Endothelial cell of umbilical vein (primary cell): ENCODE measurements at regions of chrX and their contacts with region 1.

Region 1: DNA sequence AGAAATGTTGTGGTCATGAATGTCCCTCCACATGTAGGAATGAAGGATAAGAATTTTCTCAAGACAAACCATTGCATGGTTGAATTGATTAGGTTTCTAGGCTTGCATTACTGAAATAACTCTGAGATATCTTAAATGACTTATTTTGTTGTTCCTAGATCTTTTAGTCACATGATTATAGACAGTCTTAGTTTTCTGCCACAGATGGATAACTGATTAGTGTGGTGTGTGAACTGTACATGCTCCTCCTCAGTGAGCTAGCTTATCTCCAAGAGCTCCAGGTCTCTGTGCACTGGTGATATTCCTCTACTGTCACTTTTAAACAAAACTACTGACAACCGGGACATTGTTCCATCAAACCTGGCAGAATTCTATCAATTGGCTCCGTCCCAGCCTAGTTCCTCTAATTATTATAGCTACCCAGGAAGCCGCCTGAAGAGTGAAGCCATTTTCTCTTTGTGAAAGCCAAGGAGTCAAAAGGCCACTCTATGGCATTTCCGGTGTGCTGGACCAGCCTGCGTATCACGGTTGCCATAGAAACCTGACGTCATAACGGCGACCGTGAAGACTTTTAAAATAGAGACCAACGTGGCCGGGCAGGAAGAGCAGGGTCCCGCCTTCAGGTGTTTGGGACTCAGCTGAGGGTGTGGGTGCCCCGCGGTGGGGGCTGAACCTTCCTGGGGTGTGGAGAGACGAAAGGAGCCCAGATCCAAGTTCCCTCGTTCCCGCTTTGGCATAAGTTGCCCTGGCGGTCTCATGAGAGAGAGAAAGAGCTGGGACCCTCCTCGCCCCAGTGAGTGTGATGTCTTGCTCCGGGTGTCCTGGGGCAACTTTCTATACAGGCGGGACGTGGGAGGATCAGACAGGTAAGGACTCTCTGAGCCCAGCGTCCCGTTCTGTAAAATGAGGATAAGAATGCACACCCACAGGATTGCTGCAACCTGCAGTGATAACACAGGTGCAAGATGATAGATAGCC is 28.2 kb downstream of the BEX3 start:
- DNase-seq: peak; percentile 79
- H3K4me3 ChIP-seq: peak overlapping the region; percentile 19 to 62 (median 41)
- H3K27ac ChIP-seq: peak overlapping the region; percentile 71
- H3K4me1 ChIP-seq: peaks cover 11% of the 10 kb centered on the region
- H3K27me3 ChIP-seq: no peaks in the 10 kb centered on the region
- CTCF ChIP-seq: no peak
- POLR2A ChIP-seq: no peak

Region 2: GRCh38 chrX:103356130-103356798 is 48.3 kb before region 1 on chrX and contains the start of gene TCEAL9:
- CTCF ChIA-PET with region 1: no interaction called
- POLR2A ChIA-PET with region 1: interaction called, 7 read pairs
- dilution Hi-C with region 1: no loop called
- intact Hi-C with region 1: loop called (anchors 1 kb)
- DNase-seq: peak; percentile 79
- H3K4me3 ChIP-seq: peak within 1 kb of the TSS; percentile 81 to 97 (median 90)
- H3K27ac ChIP-seq: peak within 1 kb of the TSS; percentile 91
- H3K4me1 ChIP-seq: peaks cover 18% of the 10 kb centered on the region
- H3K27me3 ChIP-seq: no peaks in the 10 kb centered on the region
- CTCF ChIP-seq: no peak
- POLR2A ChIP-seq: peak; percentile 78
- total RNA-seq, gene TCEAL9: 98.3 and 99.2 TPM in 2 replicates

Region 3: GRCh38 chrX:103756736-103757135 is 352.2 kb after region 1 on chrX:
- CTCF ChIA-PET with region 1: no interaction called
- POLR2A ChIA-PET with region 1: no interaction called
- dilution Hi-C with region 1: no loop called
- intact Hi-C with region 1: no loop called
- DNase-seq: no peak
- H3K4me3 ChIP-seq: no peak overlapping the region
- H3K27ac ChIP-seq: no peak overlapping the region
- H3K4me1 ChIP-seq: no peaks in the 10 kb centered on the region
- H3K27me3 ChIP-seq: no peaks in the 10 kb centered on the region
- CTCF ChIP-seq: no peak
- POLR2A ChIP-seq: no peak

Region 4: DNA sequence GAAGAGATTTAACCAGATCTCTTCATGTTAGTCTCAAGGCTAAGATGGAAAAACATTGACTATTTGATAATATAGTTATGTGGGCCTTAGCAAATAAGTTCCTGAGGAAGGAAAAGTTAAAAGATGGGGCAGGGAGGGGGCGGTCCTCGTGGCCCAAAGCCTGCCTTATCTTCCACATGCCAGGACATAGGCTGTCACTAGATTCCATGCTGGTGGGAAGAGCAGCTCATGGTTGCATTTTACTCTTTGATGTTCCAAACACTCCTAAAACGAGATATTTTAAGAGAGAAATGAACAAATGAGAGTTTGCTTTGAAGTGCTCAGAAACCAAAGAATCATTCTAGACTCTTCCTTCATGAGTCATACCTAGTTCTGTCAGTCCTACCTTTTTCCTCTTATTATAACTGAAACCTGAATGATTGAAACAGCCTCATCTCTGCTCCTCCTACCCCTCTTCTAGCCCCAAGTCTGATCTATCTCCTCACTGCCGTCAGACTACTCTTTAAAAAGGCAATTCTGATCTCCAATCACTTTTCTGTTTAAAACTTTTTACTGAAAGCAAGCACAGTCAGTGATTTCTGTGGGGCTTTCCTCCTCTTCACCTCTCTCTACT is 402.4 kb after region 1 on chrX:
- CTCF ChIA-PET with region 1: no interaction called
- POLR2A ChIA-PET with region 1: no interaction called
- dilution Hi-C with region 1: no loop called
- intact Hi-C with region 1: no loop called
- DNase-seq: no peak
- H3K4me3 ChIP-seq: no peak overlapping the region
- H3K27ac ChIP-seq: no peak overlapping the region
- H3K4me1 ChIP-seq: no peaks in the 10 kb centered on the region
- H3K27me3 ChIP-seq: no peaks in the 10 kb centered on the region
- CTCF ChIP-seq: no peak
- POLR2A ChIP-seq: no peak